ENCODE measurements at regions of chr17 and their contacts with region 1.

Region 1: DNA sequence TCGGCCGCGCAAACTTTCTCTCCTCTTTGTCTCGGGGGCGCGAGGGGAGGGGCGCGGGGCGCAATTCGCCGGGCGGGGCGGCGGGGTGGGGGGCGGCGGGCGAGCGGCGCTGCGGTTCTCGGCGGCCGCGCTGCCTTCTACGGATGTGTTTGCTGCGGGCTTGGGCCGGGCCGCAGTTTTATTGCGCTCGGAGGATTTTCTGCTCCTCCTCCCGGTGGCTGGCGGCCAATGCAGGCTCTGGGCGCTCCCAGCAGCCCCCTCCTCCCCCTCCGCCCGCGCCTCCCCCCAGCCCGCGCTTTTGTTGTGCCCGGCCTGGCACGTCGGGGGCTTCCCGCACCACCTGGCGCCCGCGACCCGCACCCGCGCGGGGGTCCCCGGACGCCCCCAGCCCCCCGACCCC is at the start of gene TIMP2:
- DNase-seq: peak; percentile 57 to 88 (median 71)
- ATAC-seq: peak; percentile 89
- H3K4me3 ChIP-seq: peak within 1 kb of the TSS; percentile 49
- H3K4me3 Mint-ChIP-seq: peak within 1 kb of the TSS; percentile 90
- H3K27ac ChIP-seq: no peak within 1 kb of the TSS
- H3K27ac Mint-ChIP-seq: no peak within 1 kb of the TSS
- H3K4me1 ChIP-seq: peaks cover 29% of the 10 kb centered on the region
- H3K4me1 Mint-ChIP-seq: peaks cover 17% of the 10 kb centered on the region
- H3K27me3 ChIP-seq: peaks cover 4 to 7% of the 10 kb centered on the region in 2 experiments
- H3K27me3 Mint-ChIP-seq: peaks cover 4% of the 10 kb centered on the region
- CTCF ChIP-seq: peak; percentile 22
- total RNA-seq, gene TIMP2: 6.2 to 7.0 TPM

Region 2: DNA sequence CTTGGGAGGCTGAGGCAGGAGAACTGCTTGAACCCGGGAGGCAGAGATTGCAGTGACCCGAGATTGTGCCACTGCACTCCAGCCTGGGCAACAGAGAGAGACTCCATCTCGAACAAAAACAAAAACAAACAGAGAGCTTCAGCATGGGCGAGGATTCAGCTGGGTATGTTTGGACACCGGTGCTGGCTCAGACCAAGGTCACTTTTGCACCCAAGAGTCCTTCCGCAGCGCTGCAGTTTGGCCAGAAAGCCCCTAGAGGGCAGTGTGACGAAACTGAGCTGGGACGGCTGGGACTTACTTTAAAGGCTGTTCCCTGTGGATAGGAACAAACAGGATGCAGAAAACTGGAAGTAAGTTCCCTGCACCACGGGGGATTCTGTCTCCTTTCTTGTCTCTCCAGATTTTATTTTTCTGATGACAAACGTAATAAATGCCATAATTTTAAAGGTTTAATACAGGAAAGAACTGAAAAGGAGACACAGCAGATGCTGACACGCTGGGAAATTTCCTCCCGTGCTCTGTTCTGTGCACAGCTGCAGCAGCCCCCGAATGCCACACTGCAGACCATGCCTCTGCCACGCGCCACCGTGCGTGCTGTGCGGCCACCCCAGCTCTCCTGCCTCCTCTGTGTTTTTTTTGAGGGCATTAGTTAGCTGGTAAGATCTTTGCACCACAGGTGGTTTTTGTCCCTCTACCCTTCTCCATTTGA is 59.4 kb before region 1 on chr17:
- CTCF ChIA-PET with region 1: interaction called, 4 read pairs
- POLR2A ChIA-PET with region 1: no interaction called
- intact Hi-C with region 1: loop called (anchors 2 to 5 kb)
- DNase-seq: peak; percentile 35 to 77 (median 54)
- ATAC-seq: peak; percentile 74
- H3K4me3 ChIP-seq: no peak overlapping the region
- H3K4me3 Mint-ChIP-seq: no peak overlapping the region
- H3K27ac ChIP-seq: no peak overlapping the region
- H3K27ac Mint-ChIP-seq: no peak overlapping the region
- H3K4me1 ChIP-seq: peaks cover 8% of the 10 kb centered on the region
- H3K4me1 Mint-ChIP-seq: no peaks in the 10 kb centered on the region
- H3K27me3 ChIP-seq: no peaks in the 10 kb centered on the region
- H3K27me3 Mint-ChIP-seq: no peaks in the 10 kb centered on the region
- CTCF ChIP-seq: peak; percentile 94

Region 3: DNA sequence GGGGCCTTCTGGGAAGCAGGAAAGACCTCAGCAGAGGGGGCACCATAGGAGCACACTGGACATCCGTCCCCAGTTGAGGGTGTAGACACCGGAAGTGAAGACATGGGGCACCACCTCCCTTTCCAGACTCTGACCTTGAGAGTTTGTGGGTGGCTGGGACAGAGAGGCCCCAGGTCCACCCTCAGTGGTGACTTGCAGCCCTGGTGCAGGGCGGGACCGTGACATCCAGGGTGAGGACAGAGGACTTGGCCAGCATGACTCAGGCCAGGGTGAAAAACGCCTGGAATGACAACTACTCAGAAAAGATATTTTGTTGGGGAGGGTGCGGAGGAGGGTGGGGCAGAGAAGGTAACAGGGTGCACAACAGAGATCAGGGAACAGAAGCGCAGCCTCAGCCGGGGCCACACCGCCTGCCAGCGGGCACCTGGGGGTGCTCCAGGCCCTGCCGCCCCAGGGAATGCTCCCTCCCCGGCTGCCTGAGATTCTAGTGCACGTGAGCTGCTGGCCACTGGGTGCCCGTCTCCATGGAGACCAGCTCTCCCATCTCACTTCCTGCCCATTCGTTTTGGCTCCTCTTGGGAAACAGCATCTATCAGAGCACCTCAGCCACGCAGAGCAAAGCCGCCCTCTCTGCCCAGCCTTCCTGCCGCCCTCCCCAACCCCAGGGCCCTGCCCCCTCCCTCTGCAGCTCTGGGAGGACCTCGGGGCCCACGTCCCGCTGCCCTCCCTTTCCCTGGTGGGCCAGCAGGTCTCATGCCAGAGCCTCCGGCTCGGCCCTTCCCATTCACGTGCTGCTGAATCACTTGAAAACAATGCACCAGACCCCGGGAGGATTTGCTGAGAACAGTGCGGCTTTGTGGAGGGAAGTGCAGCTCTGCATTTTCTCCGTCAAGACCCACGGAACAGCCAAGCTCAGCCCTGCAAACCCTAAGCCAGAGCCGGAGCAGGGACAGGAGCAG is 41.8 kb before region 1 on chr17:
- CTCF ChIA-PET with region 1: no interaction called
- POLR2A ChIA-PET with region 1: interaction called, 3 read pairs
- intact Hi-C with region 1: loop called (anchors 5 kb)
- DNase-seq: peak in 3 of 14 experiments; percentile 22 to 76 (median 66)
- ATAC-seq: peak; percentile 30
- H3K4me3 ChIP-seq: no peak overlapping the region
- H3K4me3 Mint-ChIP-seq: peak overlapping the region; percentile 25
- H3K27ac ChIP-seq: no peak overlapping the region
- H3K27ac Mint-ChIP-seq: no peak overlapping the region
- H3K4me1 ChIP-seq: peaks cover 34% of the 10 kb centered on the region
- H3K4me1 Mint-ChIP-seq: peaks cover 37% of the 10 kb centered on the region
- H3K27me3 ChIP-seq: peaks cover 0 to 4% of the 10 kb centered on the region in 2 experiments
- H3K27me3 Mint-ChIP-seq: no peaks in the 10 kb centered on the region
- CTCF ChIP-seq: no peak

Region 4: DNA sequence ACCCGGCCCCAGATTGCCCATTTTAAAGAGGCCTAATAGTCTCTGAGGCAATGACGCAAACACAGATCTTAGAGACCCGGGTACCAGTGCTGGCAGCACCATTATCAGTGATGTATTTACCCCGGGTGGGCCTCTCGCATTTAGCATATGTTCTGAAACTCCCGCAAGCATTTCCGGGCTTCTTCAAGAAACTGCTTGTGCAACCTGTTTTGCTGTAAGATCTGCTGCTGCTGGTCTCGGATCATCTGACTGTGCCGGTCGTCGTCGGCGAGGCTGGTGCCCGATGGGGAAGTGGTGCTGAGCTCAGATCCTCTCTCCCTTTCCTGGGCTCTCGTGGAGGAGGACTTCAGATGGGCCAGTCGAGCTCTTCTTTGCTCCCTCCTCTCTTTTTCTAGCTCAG is 34.7 kb before region 1 on chr17:
- CTCF ChIA-PET with region 1: no interaction called
- POLR2A ChIA-PET with region 1: interaction called, 7 read pairs
- intact Hi-C with region 1: loop called (anchors 2 to 5 kb)
- DNase-seq: peak; percentile 24 to 82 (median 52)
- ATAC-seq: peak; percentile 82
- H3K4me3 ChIP-seq: no peak overlapping the region
- H3K4me3 Mint-ChIP-seq: peak overlapping the region; percentile 42
- H3K27ac ChIP-seq: peak overlapping the region; percentile 23 to 48
- H3K27ac Mint-ChIP-seq: peak overlapping the region; percentile 83
- H3K4me1 ChIP-seq: peaks cover 46% of the 10 kb centered on the region
- H3K4me1 Mint-ChIP-seq: peaks cover 50% of the 10 kb centered on the region
- H3K27me3 ChIP-seq: no peaks in the 10 kb centered on the region
- H3K27me3 Mint-ChIP-seq: no peaks in the 10 kb centered on the region
- CTCF ChIP-seq: no peak